CD4-positive, alpha-beta memory T cell (primary cell): ENCODE measurements at regions of chr2 and their contacts with region 1.

Region 1: GRCh38 chr2:230411570-230412370 is 4.2 kb upstream of the SP100 start:
- DNase-seq: peak; percentile 61 to 74 (median 66)
- H3K4me3 ChIP-seq: peak overlapping the region; percentile 83 to 89
- H3K4me3 Mint-ChIP-seq: peak overlapping the region; percentile 97 to 100 (median 100)
- H3K27ac ChIP-seq: peak overlapping the region; percentile 88
- H3K27ac Mint-ChIP-seq: peak overlapping the region; percentile 96 to 100 (median 99)
- H3K4me1 ChIP-seq: peaks cover 67% of the 10 kb centered on the region
- H3K4me1 Mint-ChIP-seq: peaks cover 41 to 91% (median 62%) of the 10 kb centered on the region in 4 donors
- H3K27me3 ChIP-seq: no peaks in the 10 kb centered on the region
- H3K27me3 Mint-ChIP-seq: no peaks in the 10 kb centered on the region

Region 2: GRCh38 chr2:229083606-229084340 is 1328.0 kb before region 1 on chr2:
- CTCF ChIA-PET with region 1: no interaction called
- POLR2A ChIA-PET with region 1: no interaction called
- intact Hi-C with region 1: no loop called
- DNase-seq: no peak
- H3K4me3 ChIP-seq: no peak overlapping the region
- H3K4me3 Mint-ChIP-seq: no peak overlapping the region
- H3K27ac ChIP-seq: no peak overlapping the region
- H3K27ac Mint-ChIP-seq: no peak overlapping the region
- H3K4me1 ChIP-seq: no peaks in the 10 kb centered on the region
- H3K4me1 Mint-ChIP-seq: no peaks in the 10 kb centered on the region
- H3K27me3 ChIP-seq: no peaks in the 10 kb centered on the region
- H3K27me3 Mint-ChIP-seq: no peaks in the 10 kb centered on the region

Region 3: DNA sequence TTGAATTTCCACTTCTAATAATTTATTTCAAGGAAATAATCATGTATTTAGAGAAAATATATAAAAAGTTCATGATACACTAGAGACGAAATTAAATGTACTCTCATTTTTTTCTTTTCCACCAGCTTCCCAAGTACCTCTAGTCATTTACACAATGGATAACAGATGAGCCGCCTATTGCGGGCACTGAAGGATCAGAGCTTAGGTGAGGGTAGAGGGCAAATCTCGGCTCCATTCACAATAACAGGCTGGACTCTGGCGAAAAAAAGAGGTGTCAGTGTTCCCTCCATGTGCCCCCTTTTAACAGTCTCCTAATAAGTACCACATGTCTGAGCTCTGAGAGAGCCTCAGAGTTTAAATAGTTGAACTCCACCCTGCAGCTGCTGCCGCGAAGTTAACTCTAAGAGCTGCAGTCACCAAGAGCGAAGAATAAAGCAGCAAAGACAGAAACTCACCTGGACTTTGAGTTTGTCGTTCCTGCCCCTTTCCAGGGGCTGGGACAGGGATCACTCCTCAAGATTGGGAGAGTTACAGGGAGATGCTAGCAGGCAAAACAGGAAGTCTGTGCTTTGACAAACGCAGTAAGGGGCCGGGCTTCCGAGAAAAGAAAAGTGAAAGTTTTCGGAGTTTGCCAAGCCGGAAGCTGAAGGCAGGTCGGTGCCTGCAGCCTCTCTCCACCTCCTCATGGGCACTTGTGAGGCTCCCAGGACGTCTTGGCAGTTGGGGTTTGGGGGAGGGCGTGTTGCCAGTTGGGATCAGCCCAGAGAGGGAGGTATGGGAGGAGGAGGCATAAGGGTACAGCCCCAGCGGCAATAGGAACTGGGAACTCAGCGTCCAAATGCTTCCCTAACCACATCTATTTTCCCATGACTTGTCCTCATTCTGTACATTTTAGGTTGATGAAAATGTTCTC is 192.1 kb before region 1 on chr2 and contains the start of gene SP110:
- CTCF ChIA-PET with region 1: no interaction called
- POLR2A ChIA-PET with region 1: interaction called, 17 read pairs
- intact Hi-C with region 1: no loop called
- DNase-seq: peak; percentile 78 to 86 (median 81)
- H3K4me3 ChIP-seq: peak within 1 kb of the TSS; percentile 87 to 89
- H3K4me3 Mint-ChIP-seq: peak within 1 kb of the TSS; percentile 95 to 100 (median 99)
- H3K27ac ChIP-seq: peak within 1 kb of the TSS; percentile 86
- H3K27ac Mint-ChIP-seq: peak within 1 kb of the TSS; percentile 93 to 99 (median 98)
- H3K4me1 ChIP-seq: peaks cover 56% of the 10 kb centered on the region
- H3K4me1 Mint-ChIP-seq: peaks cover 47 to 75% (median 57%) of the 10 kb centered on the region in 4 donors
- H3K27me3 ChIP-seq: no peaks in the 10 kb centered on the region
- H3K27me3 Mint-ChIP-seq: no peaks in the 10 kb centered on the region
- total RNA-seq, gene SP110: 108 to 123 TPM

Region 4: DNA sequence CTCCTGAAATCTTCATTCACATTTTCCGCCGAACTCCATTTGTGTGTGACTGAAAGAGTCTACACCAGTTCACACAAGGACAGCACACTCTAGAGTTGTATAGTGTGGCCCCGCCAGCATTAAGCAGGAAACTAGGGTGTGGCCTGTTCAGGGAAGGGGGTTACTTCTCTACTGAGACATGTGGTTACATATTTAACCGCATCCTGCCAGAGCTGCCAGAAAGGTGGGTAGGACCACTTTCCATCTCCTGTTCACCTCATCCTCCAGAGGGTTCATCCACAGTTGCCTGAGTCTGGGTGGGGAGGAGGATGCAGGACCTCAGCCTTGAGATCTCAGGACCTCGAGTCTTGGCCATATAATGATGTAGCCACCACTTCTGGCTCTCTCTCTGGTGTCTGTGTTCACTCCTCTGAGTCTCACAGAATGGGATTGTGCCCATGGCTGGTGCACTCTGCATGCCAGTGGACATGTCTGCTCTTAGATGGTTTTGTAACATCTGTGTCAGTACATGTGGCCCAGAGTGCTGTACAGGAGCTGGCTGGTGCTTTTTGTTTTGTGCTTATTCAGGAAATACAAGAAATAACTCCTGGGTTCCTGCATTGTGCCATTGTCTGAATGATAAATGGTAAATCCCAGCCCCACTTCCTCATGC is 92.4 kb before region 1 on chr2:
- CTCF ChIA-PET with region 1: no interaction called
- POLR2A ChIA-PET with region 1: interaction called, 19 read pairs
- intact Hi-C with region 1: no loop called
- DNase-seq: peak; percentile 87 to 92 (median 87)
- H3K4me3 ChIP-seq: peak overlapping the region in 1 of 2 donors; percentile 27
- H3K4me3 Mint-ChIP-seq: peak overlapping the region; percentile 57 to 87 (median 82)
- H3K27ac ChIP-seq: peak overlapping the region; percentile 53
- H3K27ac Mint-ChIP-seq: peak overlapping the region; percentile 74 to 95 (median 93)
- H3K4me1 ChIP-seq: peaks cover 73% of the 10 kb centered on the region
- H3K4me1 Mint-ChIP-seq: peaks cover 58 to 92% (median 82%) of the 10 kb centered on the region in 4 donors
- H3K27me3 ChIP-seq: no peaks in the 10 kb centered on the region
- H3K27me3 Mint-ChIP-seq: no peaks in the 10 kb centered on the region

Region 5: GRCh38 chr2:230441227-230441897 is 29.6 kb after region 1 on chr2:
- CTCF ChIA-PET with region 1: no interaction called
- POLR2A ChIA-PET with region 1: interaction called, 6 read pairs
- intact Hi-C with region 1: loop called (anchors 2 kb)
- DNase-seq: peak; percentile 62 to 82 (median 70)
- H3K4me3 ChIP-seq: no peak overlapping the region
- H3K4me3 Mint-ChIP-seq: peak overlapping the region; percentile 33 to 80 (median 67)
- H3K27ac ChIP-seq: peak overlapping the region; percentile 40
- H3K27ac Mint-ChIP-seq: peak overlapping the region; percentile 33 to 92 (median 89)
- H3K4me1 ChIP-seq: peaks cover 45% of the 10 kb centered on the region
- H3K4me1 Mint-ChIP-seq: peaks cover 39 to 64% (median 47%) of the 10 kb centered on the region in 4 donors
- H3K27me3 ChIP-seq: no peaks in the 10 kb centered on the region
- H3K27me3 Mint-ChIP-seq: no peaks in the 10 kb centered on the region

Region 6: GRCh38 chr2:230525682-230526081 is 113.9 kb after region 1 on chr2:
- CTCF ChIA-PET with region 1: no interaction called
- POLR2A ChIA-PET with region 1: no interaction called
- intact Hi-C with region 1: no loop called
- DNase-seq: peak in 1 of 5 donors; percentile 2
- H3K4me3 ChIP-seq: no peak overlapping the region
- H3K4me3 Mint-ChIP-seq: no peak overlapping the region
- H3K27ac ChIP-seq: no peak overlapping the region
- H3K27ac Mint-ChIP-seq: no peak overlapping the region
- H3K4me1 ChIP-seq: peaks cover 6% of the 10 kb centered on the region
- H3K4me1 Mint-ChIP-seq: peaks cover 0 to 16% (median 4%) of the 10 kb centered on the region in 4 donors
- H3K27me3 ChIP-seq: no peaks in the 10 kb centered on the region
- H3K27me3 Mint-ChIP-seq: no peaks in the 10 kb centered on the region

Region 7: GRCh38 chr2:230602562-230603230 is 190.9 kb after region 1 on chr2:
- CTCF ChIA-PET with region 1: no interaction called
- POLR2A ChIA-PET with region 1: interaction called, 23 read pairs
- intact Hi-C with region 1: no loop called
- DNase-seq: peak; percentile 49 to 71 (median 62)
- H3K4me3 ChIP-seq: peak overlapping the region; percentile 41 to 44
- H3K4me3 Mint-ChIP-seq: peak overlapping the region; percentile 36 to 85 (median 78)
- H3K27ac ChIP-seq: peak overlapping the region; percentile 59
- H3K27ac Mint-ChIP-seq: peak overlapping the region; percentile 81 to 99 (median 97)
- H3K4me1 ChIP-seq: peaks cover 63% of the 10 kb centered on the region
- H3K4me1 Mint-ChIP-seq: peaks cover 48 to 81% (median 63%) of the 10 kb centered on the region in 4 donors
- H3K27me3 ChIP-seq: no peaks in the 10 kb centered on the region
- H3K27me3 Mint-ChIP-seq: no peaks in the 10 kb centered on the region

Region 8: GRCh38 chr2:230798769-230799399 is 387.1 kb after region 1 on chr2:
- CTCF ChIA-PET with region 1: no interaction called
- POLR2A ChIA-PET with region 1: no interaction called
- intact Hi-C with region 1: loop called (anchors 5 kb)
- DNase-seq: peak; percentile 57 to 71 (median 64)
- H3K4me3 ChIP-seq: no peak overlapping the region
- H3K4me3 Mint-ChIP-seq: peak overlapping the region in 1 of 8 donors; percentile 47
- H3K27ac ChIP-seq: peak overlapping the region; percentile 8
- H3K27ac Mint-ChIP-seq: peak overlapping the region in 3 of 7 donors; percentile 7 to 62 (median 43)
- H3K4me1 ChIP-seq: peaks cover 53% of the 10 kb centered on the region
- H3K4me1 Mint-ChIP-seq: peaks cover 20 to 26% (median 23%) of the 10 kb centered on the region in 4 donors
- H3K27me3 ChIP-seq: no peaks in the 10 kb centered on the region
- H3K27me3 Mint-ChIP-seq: no peaks in the 10 kb centered on the region